ENCODE measurements at regions of chr11 and their contacts with region 1.

Region 1: DNA sequence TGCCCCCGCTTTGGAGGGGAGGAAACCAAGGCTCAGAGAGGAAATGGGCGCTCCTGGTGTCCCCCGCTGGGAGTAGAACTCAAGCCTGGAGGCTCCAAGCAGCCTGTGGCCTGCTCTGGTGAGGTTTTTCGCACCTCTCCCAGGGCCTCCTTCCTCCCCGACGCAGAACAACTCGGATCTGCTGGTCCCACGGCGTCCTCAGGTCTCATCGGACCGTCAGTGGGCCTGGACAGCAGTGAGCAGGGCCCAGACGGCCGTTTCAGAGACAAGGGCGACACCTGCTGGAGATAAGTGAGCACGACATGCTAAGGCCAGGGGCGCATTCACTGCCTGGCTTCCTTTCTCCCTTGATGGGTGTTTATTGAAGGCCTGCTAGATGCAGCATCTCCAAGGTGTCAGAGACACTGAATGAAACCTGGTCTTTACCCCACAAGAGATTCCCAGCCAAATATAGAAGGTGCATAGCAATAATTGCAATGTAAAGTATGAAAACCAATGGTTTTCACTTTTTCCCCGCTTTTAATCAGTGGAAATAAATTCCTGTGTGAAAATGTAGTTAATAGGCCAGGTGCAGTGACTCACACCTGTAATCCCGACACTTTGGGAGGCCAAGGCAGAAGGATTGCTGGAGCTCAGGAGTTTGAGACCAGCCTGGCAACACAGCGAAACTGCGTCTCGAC is 26.9 kb upstream of the CD82 start:
- DNase-seq: peak; percentile 53 to 70 (median 62)
- H3K4me3 ChIP-seq: no peak overlapping the region
- H3K4me3 Mint-ChIP-seq: no peak overlapping the region
- H3K27ac ChIP-seq: no peak overlapping the region
- H3K27ac Mint-ChIP-seq: no peak overlapping the region
- H3K4me1 ChIP-seq: no peaks in the 10 kb centered on the region
- H3K4me1 Mint-ChIP-seq: peaks cover 0 to 3% (median 0%) of the 10 kb centered on the region in 4 donors
- H3K27me3 ChIP-seq: no peaks in the 10 kb centered on the region
- H3K27me3 Mint-ChIP-seq: peaks cover 1 to 2% of the 10 kb centered on the region in 2 donors

Region 2: GRCh38 chr11:44095506-44096394 is 442.8 kb before region 1 on chr11 and contains the start of gene EXT2:
- CTCF ChIA-PET with region 1: interaction called, 10 read pairs
- POLR2A ChIA-PET with region 1: no interaction called
- intact Hi-C with region 1: loop called (anchors 1 kb)
- DNase-seq: peak; percentile 79 to 85 (median 83)
- H3K4me3 ChIP-seq: peak within 1 kb of the TSS; percentile 61 to 70
- H3K4me3 Mint-ChIP-seq: peak within 1 kb of the TSS; percentile 87 to 92 (median 90)
- H3K27ac ChIP-seq: peak within 1 kb of the TSS; percentile 58
- H3K27ac Mint-ChIP-seq: peak within 1 kb of the TSS; percentile 68 to 90 (median 85)
- H3K4me1 ChIP-seq: peaks cover 29% of the 10 kb centered on the region
- H3K4me1 Mint-ChIP-seq: peaks cover 25 to 50% (median 35%) of the 10 kb centered on the region in 4 donors
- H3K27me3 ChIP-seq: no peaks in the 10 kb centered on the region
- H3K27me3 Mint-ChIP-seq: no peaks in the 10 kb centered on the region
- total RNA-seq, gene EXT2: 28.2 to 30.3 TPM

Region 3: GRCh38 chr11:44110231-44110679 is 428.3 kb before region 1 on chr11:
- CTCF ChIA-PET with region 1: interaction called, 10 read pairs
- POLR2A ChIA-PET with region 1: no interaction called
- intact Hi-C with region 1: no loop called
- DNase-seq: peak; percentile 31 to 44 (median 39)
- H3K4me3 ChIP-seq: no peak overlapping the region
- H3K4me3 Mint-ChIP-seq: no peak overlapping the region
- H3K27ac ChIP-seq: no peak overlapping the region
- H3K27ac Mint-ChIP-seq: peak overlapping the region in 5 of 7 donors; percentile 65 to 89 (median 87)
- H3K4me1 ChIP-seq: peaks cover 4% of the 10 kb centered on the region
- H3K4me1 Mint-ChIP-seq: peaks cover 6 to 8% (median 7%) of the 10 kb centered on the region in 4 donors
- H3K27me3 ChIP-seq: no peaks in the 10 kb centered on the region
- H3K27me3 Mint-ChIP-seq: no peaks in the 10 kb centered on the region

Region 4: GRCh38 chr11:44286268-44286880 is 252.1 kb before region 1 on chr11:
- CTCF ChIA-PET with region 1: interaction called, 27 read pairs
- POLR2A ChIA-PET with region 1: no interaction called
- intact Hi-C with region 1: no loop called
- DNase-seq: peak in 4 of 5 donors; percentile 41 to 49 (median 46)
- H3K4me3 ChIP-seq: no peak overlapping the region
- H3K4me3 Mint-ChIP-seq: no peak overlapping the region
- H3K27ac ChIP-seq: no peak overlapping the region
- H3K27ac Mint-ChIP-seq: peak overlapping the region in 1 of 7 donors; percentile 56
- H3K4me1 ChIP-seq: no peaks in the 10 kb centered on the region
- H3K4me1 Mint-ChIP-seq: peaks cover 0 to 2% (median 0%) of the 10 kb centered on the region in 4 donors
- H3K27me3 ChIP-seq: no peaks in the 10 kb centered on the region
- H3K27me3 Mint-ChIP-seq: peaks cover 6 to 7% of the 10 kb centered on the region in 2 donors

Region 5: GRCh38 chr11:44519989-44520737 is 18.4 kb before region 1 on chr11:
- CTCF ChIA-PET with region 1: interaction called, 54 read pairs
- POLR2A ChIA-PET with region 1: no interaction called
- intact Hi-C with region 1: loop called (anchors 1 kb)
- DNase-seq: no peak
- H3K4me3 ChIP-seq: no peak overlapping the region
- H3K4me3 Mint-ChIP-seq: no peak overlapping the region
- H3K27ac ChIP-seq: no peak overlapping the region
- H3K27ac Mint-ChIP-seq: no peak overlapping the region
- H3K4me1 ChIP-seq: no peaks in the 10 kb centered on the region
- H3K4me1 Mint-ChIP-seq: peaks cover 0 to 7% (median 1%) of the 10 kb centered on the region in 4 donors
- H3K27me3 ChIP-seq: no peaks in the 10 kb centered on the region
- H3K27me3 Mint-ChIP-seq: peaks cover 9 to 29% of the 10 kb centered on the region in 2 donors